Cardiac septum (tissue), 1 donor: ENCODE measurements at regions of chr4 and their contacts with region 1.

Region 1: GRCh38 chr4:140851032-140851636 is 94.9 kb upstream of the TBC1D9 start:
- DNase-seq: no peak

Region 2: DNA sequence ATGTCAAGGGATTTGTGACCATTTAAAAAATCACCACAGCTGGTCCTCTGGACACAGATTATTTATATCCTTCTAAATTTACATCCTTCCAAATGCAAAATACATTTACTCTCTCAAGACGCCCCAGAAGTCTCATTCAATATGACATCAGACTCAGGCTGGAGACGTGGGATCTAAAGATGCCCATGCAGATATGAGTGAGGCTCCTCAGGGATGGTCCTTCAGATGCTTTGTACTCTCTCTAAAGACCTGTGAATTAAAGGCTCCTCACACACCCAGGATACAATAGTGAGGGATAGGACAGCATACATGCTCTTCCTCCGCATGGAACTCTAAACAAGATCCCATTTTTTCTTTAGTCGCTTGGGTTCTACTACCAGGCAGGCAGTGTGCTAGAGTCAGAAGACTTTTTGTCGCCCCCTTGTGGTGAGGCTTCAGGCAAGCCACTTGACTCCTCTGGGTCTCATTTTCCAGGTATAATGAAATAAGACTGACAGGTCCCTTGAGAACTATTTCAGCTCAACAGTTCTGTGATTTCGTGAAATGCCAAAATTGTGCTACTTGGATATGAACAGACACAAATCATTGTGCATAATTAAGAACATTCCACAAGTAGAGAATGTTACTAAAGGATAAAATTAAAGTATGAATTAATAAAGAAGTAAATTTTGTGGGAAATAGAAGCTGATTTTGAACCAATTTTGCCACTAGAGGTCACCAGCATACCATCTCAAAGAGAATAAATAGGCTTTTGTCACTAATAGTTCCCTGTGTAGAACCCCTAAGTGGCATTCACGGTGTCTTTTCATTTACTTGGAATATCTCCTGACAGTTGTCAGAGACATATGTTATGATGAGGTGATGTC is 491.3 kb before region 1 on chr4:
- intact Hi-C with region 1: loop called (anchors 2 kb)
- DNase-seq: peak; percentile 82

Region 3: DNA sequence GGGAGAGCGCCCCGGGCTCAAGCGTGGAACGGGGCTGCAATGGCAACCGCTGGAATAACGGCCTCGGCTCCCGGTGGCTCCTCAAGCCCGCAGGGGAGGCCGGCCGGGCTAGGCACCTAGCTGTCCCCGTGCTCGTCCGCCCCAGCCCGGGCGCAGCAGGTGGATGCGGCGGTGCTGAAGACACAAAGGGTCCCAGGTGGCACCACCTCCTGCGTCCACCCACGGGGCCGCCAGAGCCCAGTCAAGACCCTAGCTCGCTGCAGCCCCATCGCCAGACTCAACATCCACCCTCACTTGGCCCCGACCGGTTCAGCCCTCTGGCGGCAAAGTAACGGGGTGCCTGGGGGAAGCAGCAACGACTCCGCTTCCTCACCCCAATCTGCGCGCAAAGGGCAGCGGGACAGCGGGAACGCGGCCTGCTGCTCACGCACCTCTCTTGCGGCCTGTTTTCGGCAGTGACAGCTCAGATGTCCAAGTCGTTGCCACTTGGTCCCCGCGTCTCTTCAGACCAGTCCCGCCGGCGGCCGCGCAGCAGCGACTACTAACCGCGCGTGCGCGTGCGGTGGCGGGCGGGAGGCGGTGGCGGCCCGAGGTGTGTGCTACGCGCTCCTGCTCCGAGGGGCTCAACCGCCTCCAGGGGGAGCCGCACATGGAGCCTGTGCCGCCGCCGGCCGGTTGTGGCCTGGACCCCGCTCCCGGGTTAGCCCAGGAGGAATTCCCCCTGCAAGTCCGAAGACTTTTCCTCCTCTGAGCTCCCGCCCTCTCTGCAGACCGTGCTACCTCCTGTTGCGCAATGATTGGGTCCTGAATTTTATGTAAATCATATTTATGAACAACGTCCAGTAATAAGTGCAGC is 423.8 kb before region 1 on chr4 and contains the start of gene CLGN:
- intact Hi-C with region 1: loop called (anchors 10 kb)
- DNase-seq: peak; percentile 87
- total RNA-seq, gene CLGN: 44.7 TPM

Region 4: DNA sequence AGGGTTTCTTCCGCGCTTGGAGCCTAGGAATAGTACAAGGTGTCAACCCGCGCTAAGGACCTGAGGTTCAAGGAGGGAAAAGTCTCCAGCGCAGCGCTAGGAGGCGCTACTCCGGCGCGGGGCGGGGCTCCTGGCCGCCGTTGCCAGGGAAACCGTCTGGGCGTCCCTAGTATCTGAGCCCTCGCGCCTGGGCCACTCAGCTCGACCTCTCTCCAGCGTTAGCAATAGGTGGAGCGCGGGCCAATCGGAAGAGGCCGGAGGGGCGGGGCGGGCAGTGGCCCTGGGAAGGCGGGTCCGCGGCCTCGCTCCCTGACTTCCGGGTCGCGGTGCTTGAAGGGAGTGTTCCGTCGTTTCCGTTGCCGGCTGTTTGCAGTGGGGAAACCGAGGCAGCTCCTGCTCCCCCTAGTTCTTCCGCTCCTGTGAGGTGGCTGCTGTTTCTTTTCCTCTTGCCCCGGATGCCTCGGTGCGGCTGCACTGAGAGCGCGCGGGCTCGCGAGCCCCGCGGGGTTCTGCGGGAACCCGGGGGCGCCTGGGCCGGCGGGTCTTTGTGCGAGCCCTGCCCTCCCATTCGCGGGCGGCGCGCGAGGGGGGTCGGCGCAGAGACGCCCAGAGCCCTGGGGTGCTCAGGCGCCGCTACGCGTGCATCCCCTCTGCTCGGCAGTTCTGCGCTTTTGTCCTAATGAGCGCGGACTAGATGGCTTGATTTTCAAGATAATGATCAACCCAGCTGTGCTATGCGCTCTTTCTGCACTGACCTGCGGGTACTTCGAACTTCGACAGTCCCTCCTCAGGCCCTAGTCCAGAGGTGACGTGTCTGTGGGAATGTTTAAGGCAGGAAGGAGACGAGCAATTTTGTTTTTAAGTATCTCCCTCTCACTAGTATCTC is 327.0 kb before region 1 on chr4 and contains the start of gene ELMOD2:
- intact Hi-C with region 1: loop called (anchors 10 kb)
- DNase-seq: peak; percentile 100
- total RNA-seq, gene ELMOD2: 18.3 TPM

Region 5: DNA sequence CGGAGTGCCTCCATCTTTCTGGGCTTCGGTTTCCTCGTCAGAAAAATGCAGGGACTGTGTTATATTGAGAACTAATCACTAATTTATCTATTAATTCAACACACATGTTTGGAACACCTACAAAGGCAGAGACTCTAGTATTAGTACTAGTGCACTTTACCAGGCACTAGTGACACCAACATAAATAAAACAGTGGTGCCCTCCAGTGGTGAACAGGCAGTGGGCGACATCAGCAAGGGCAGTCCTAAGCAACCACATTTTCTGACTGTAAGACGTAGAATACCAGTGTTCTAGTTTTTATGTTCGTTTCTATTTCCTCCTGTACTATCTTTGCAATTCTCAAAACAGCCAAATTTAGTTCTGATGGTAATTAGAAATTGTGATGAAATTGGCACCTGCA is 213.3 kb before region 1 on chr4:
- intact Hi-C with region 1: loop called (anchors 10 kb)
- DNase-seq: no peak

Region 6: GRCh38 chr4:140686796-140687195 is 164.3 kb before region 1 on chr4:
- intact Hi-C with region 1: no loop called
- DNase-seq: no peak

Region 7: GRCh38 chr4:140743194-140743931 is 107.8 kb before region 1 on chr4:
- intact Hi-C with region 1: loop called (anchors 5 kb)
- DNase-seq: no peak

Region 8: DNA sequence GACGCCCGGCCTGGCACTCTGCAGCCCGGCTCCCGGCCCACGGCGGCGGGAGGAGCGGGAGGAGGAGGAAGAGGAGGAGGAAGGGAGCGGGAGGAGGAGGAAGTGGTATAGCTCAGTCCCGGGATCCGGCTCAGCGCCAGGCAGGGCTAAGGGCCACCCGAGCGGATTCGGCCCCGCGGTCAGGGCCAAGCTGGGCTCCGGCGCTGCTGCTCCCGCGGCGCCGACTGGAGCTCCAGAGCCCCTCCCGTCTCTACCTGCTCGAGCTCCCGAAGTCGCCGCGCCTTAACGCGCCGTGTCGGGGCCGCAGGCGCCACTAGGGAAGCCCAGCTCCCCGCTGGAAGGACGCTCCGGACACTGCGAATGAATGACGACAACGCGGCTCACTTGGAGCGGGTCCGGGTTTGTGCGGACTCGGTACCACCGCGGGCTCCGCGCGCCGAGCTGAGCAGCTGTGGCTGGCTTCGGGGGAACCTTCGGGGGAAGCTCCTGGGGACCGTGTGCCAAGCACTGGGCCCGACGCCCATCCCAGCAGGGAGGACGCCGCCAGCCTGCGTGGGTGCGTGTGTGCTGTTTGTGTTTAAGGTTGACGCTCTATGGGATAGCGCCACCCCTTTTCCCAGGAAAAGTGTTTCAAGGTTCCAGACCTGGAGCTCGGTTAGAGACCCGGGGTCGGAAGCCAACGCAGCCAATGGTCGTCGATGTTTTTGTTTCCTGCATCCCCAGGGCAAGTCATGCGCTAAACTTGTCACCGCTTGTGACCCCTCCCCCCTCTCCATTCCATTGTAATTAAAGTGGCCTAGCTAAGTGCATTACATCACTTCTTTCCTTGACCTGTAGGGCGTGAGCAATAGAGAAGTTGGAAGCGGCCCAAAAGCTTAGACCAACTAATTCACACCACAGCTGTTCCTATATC is 94.6 kb before region 1 on chr4 and contains the start of gene TBC1D9:
- intact Hi-C with region 1: loop called (anchors 5 kb)
- DNase-seq: peak; percentile 88
- total RNA-seq, gene TBC1D9: 15.0 TPM